ENCODE measurements at regions of chr5 and their contacts with region 1.

Region 1: DNA sequence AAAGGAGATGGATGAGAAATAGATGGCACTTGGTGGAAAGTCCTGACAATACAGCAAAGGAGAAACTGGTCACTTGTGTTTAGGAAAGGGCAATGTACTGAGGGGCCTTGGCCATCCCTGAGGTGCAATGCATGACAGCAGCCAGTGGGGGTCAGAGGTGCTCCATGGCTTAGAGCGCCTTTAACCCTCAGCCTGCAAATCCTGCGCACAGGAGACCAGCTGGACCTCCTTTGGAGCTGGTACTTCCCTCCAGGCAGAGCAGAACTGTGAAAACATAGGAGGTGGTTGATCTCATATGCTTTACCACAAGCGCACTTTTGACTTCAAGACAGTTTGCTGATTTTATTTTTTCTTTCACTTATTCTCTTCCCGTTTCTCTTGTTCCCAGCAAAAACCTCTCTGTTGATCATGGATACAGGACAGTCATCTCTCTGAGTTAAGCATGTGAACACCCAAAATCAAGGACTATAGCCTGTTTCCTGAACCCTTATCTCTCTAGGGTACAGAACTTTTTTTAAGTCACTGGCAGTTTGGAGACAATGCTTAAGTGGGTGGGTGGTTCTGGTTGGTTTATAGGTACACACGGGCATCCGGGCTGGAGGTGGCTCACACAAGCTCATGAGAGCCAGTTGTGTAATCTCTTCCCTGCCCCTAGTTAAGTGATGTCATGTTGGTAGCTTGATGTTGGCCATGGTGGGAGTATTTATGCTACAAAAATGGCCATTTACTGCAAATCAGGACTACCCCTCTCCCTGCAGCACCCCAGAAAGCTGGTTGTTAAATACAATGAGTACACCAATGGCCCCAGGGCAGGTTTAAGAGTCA is 37.6 kb upstream of the ANKRD55 start:
- DNase-seq: peak; percentile 71
- H3K4me3 ChIP-seq: no peak overlapping the region
- H3K27ac ChIP-seq: no peak overlapping the region
- H3K4me1 ChIP-seq: peaks cover 13% of the 10 kb centered on the region
- H3K27me3 ChIP-seq: no peaks in the 10 kb centered on the region
- CTCF ChIP-seq: peak; percentile 99 to 100

Region 2: DNA sequence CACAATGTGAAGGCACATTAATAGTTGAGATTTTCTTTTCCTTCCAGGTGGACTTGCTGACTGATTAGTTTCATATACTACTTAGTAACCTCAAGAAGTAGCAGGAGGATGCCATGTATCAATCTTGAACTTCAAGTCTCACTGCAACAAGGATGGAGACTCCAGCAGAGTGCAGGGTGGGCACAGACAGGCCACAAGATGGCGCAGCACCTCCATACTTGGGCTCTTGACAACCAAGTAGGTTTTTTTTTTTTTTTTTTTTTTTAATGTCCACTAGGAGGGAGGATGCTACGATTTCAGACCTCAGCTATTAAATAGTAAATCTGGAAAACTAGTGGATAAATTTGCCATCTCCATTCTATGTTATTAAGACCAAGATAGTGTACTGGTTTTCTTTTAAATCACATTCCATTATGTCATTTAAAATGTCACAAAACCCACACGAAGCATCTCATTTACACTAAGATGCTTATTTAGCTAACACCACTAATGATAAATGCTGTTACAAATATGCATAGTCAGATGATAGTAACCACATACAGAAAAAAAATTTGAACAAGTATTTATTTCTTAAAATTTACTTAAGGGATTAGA is 334.6 kb before region 1 on chr5:
- CTCF ChIA-PET with region 1: no interaction called
- dilution Hi-C with region 1: no loop called
- in situ Hi-C with region 1: no loop called
- intact Hi-C with region 1: loop called (anchors 1 kb)
- DNase-seq: peak; percentile 63
- H3K4me3 ChIP-seq: no peak overlapping the region
- H3K27ac ChIP-seq: no peak overlapping the region
- H3K4me1 ChIP-seq: no peaks in the 10 kb centered on the region
- H3K27me3 ChIP-seq: no peaks in the 10 kb centered on the region
- CTCF ChIP-seq: peak; percentile 91 to 97

Region 3: DNA sequence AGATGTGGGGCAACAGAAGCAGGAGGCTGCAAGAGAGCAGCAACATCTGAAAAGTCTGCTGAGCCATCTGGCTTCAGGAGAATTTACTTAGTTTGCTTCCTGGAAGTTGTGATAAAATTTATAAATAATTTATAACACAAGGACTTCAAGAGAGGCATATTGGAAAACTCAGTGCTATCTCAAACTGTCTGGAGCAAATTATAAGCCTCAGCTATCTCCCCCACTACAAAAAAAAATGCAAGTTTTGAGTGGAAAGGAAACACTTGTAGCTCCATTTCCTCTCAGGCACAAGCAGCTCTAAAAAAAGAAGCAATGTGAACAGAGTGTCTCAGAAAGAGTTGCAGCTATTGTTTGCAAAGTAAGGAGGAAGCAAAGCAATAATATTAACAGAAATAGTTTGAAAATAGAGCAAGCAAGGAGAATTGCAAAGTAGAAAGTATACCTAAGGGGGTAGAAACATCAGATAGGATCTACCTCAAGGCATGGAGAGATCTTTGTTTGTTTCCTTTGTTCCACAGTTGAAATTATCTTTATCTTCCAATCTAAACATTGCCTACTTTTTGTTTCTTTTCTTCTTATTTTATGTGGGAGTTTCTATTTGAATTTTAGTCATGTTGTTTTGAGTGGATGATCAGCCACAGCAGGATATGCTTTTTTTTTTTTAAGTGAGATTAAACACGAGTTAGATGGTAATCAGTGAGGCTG is 220.1 kb before region 1 on chr5:
- CTCF ChIA-PET with region 1: no interaction called
- dilution Hi-C with region 1: no loop called
- in situ Hi-C with region 1: no loop called
- intact Hi-C with region 1: no loop called
- DNase-seq: no peak
- H3K4me3 ChIP-seq: no peak overlapping the region
- H3K27ac ChIP-seq: no peak overlapping the region
- H3K4me1 ChIP-seq: no peaks in the 10 kb centered on the region
- H3K27me3 ChIP-seq: peaks cover 20% of the 10 kb centered on the region
- CTCF ChIP-seq: no peak

Region 4: GRCh38 chr5:56328753-56329560 is 58.2 kb after region 1 on chr5:
- CTCF ChIA-PET with region 1: no interaction called
- dilution Hi-C with region 1: no loop called
- in situ Hi-C with region 1: no loop called
- intact Hi-C with region 1: no loop called
- DNase-seq: peak; percentile 84
- H3K4me3 ChIP-seq: no peak overlapping the region
- H3K27ac ChIP-seq: peak overlapping the region; percentile 56
- H3K4me1 ChIP-seq: peaks cover 14% of the 10 kb centered on the region
- H3K27me3 ChIP-seq: no peaks in the 10 kb centered on the region
- CTCF ChIP-seq: no peak

Region 5: GRCh38 chr5:56440871-56441740 is 170.3 kb after region 1 on chr5:
- CTCF ChIA-PET with region 1: no interaction called
- dilution Hi-C with region 1: no loop called
- in situ Hi-C with region 1: no loop called
- intact Hi-C with region 1: loop called (anchors 10 kb)
- DNase-seq: peak; percentile 89
- H3K4me3 ChIP-seq: no peak overlapping the region
- H3K27ac ChIP-seq: peak overlapping the region; percentile 16
- H3K4me1 ChIP-seq: peaks cover 8% of the 10 kb centered on the region
- H3K27me3 ChIP-seq: no peaks in the 10 kb centered on the region
- CTCF ChIP-seq: no peak

Region 6: DNA sequence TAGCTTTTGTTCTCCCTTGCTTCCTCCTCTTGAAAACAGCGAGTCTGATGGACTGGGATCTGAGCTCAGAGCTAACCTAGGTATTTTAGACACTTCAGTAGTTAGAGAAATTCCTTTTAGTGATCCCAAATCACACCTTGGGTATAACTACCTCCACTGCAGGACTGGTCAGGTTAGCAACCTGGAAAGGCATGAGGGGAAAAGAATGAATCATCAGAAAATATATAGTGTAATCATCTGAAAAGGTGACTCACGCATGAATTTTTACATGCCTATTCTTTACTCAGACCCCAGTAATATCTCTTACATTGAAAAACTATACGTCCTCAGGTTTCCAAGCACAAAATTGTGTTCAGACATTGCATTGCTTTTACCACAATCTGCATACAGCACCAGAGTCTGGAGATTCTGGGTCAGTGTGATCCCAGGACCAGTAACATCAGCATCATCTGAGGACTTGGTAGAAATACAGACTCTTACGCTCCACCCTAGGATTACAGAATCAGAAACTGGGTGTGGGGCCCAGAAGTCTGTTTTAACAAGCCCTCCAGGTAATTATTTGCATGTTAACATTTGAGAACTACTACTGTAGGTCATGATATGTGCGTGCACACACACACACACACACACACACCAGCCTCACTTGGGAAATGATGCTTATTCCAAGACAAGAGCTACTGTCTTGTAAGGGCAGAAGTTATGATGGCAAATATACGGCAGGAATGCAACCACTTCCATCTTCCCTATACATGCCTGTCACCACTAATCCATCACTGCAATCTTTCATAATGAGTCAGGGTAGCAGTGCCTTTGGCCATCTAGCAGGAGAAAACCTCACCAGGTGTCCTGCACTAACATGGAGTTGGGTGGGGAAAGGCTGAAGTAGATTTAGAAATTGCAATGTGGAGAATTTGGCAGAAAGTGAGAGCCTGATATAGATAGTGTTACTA is 272.9 kb after region 1 on chr5:
- CTCF ChIA-PET with region 1: no interaction called
- dilution Hi-C with region 1: no loop called
- in situ Hi-C with region 1: no loop called
- intact Hi-C with region 1: loop called (anchors 5 kb)
- DNase-seq: peak; percentile 87
- H3K4me3 ChIP-seq: no peak overlapping the region
- H3K27ac ChIP-seq: peak overlapping the region; percentile 82
- H3K4me1 ChIP-seq: peaks cover 18% of the 10 kb centered on the region
- H3K27me3 ChIP-seq: no peaks in the 10 kb centered on the region
- CTCF ChIP-seq: no peak

Region 7: GRCh38 chr5:56838409-56839039 is 567.7 kb after region 1 on chr5:
- CTCF ChIA-PET with region 1: interaction called, 12 read pairs
- dilution Hi-C with region 1: no loop called
- in situ Hi-C with region 1: loop called (anchors 5 kb)
- intact Hi-C with region 1: loop called (anchors 1 kb)
- DNase-seq: peak; percentile 58
- H3K4me3 ChIP-seq: peak overlapping the region in 2 of 3 experiments; percentile 12 to 25
- H3K27ac ChIP-seq: peak overlapping the region; percentile 27
- H3K4me1 ChIP-seq: peaks cover 5% of the 10 kb centered on the region
- H3K27me3 ChIP-seq: no peaks in the 10 kb centered on the region
- CTCF ChIP-seq: peak; percentile 32 to 57

Region 8: GRCh38 chr5:57128325-57128724 is 857.5 kb after region 1 on chr5:
- CTCF ChIA-PET with region 1: no interaction called
- dilution Hi-C with region 1: no loop called
- in situ Hi-C with region 1: loop called in 1 of 2 experiments (anchors 25 kb)
- intact Hi-C with region 1: no loop called
- DNase-seq: no peak
- H3K4me3 ChIP-seq: no peak overlapping the region
- H3K27ac ChIP-seq: no peak overlapping the region
- H3K4me1 ChIP-seq: no peaks in the 10 kb centered on the region
- H3K27me3 ChIP-seq: no peaks in the 10 kb centered on the region
- CTCF ChIP-seq: no peak

Region 9: GRCh38 chr5:57267805-57268204 is 997.0 kb after region 1 on chr5:
- CTCF ChIA-PET with region 1: no interaction called
- dilution Hi-C with region 1: no loop called
- in situ Hi-C with region 1: loop called (anchors 25 kb)
- intact Hi-C with region 1: no loop called
- DNase-seq: no peak
- H3K4me3 ChIP-seq: no peak overlapping the region
- H3K27ac ChIP-seq: no peak overlapping the region
- H3K4me1 ChIP-seq: no peaks in the 10 kb centered on the region
- H3K27me3 ChIP-seq: no peaks in the 10 kb centered on the region
- CTCF ChIP-seq: no peak

Measured in mammary epithelial cell (primary cell).